H1 (cell line): ENCODE measurements at regions of chr11 and their contacts with region 1.

Region 1: GRCh38 chr11:73866586-73866996 is 10.1 kb downstream of the COA4 start:
- DNase-seq: no peak
- H3K4me3 ChIP-seq: no peak overlapping the region
- H3K27ac ChIP-seq: no peak overlapping the region
- H3K4me1 ChIP-seq: peaks cover 0 to 2% (median 0%) of the 10 kb centered on the region in 4 experiments; a peak in 1 of 7 replicates
- H3K27me3 ChIP-seq: no peaks in the 10 kb centered on the region
- CTCF ChIP-seq: no peak
- EP300 ChIP-seq: no peak
- POLR2A ChIP-seq: peak in 1 of 2 experiments; percentile 8; a peak in 2 of 3 replicates
- RAD21 ChIP-seq: no peak

Region 2: GRCh38 chr11:73856031-73856567 is 10.5 kb before region 1 on chr11:
- CTCF ChIA-PET with region 1: interaction called, 6 read pairs
- POLR2A ChIA-PET with region 1: interaction called, 55 read pairs
- DNase-seq: no peak
- H3K4me3 ChIP-seq: no peak overlapping the region
- H3K27ac ChIP-seq: no peak overlapping the region
- H3K4me1 ChIP-seq: peaks cover 0 to 8% (median 6%) of the 10 kb centered on the region in 4 experiments; a peak in 3 of 7 replicates
- H3K27me3 ChIP-seq: no peaks in the 10 kb centered on the region
- CTCF ChIP-seq: no peak
- EP300 ChIP-seq: no peak
- POLR2A ChIP-seq: no peak
- RAD21 ChIP-seq: no peak

Region 3: DNA sequence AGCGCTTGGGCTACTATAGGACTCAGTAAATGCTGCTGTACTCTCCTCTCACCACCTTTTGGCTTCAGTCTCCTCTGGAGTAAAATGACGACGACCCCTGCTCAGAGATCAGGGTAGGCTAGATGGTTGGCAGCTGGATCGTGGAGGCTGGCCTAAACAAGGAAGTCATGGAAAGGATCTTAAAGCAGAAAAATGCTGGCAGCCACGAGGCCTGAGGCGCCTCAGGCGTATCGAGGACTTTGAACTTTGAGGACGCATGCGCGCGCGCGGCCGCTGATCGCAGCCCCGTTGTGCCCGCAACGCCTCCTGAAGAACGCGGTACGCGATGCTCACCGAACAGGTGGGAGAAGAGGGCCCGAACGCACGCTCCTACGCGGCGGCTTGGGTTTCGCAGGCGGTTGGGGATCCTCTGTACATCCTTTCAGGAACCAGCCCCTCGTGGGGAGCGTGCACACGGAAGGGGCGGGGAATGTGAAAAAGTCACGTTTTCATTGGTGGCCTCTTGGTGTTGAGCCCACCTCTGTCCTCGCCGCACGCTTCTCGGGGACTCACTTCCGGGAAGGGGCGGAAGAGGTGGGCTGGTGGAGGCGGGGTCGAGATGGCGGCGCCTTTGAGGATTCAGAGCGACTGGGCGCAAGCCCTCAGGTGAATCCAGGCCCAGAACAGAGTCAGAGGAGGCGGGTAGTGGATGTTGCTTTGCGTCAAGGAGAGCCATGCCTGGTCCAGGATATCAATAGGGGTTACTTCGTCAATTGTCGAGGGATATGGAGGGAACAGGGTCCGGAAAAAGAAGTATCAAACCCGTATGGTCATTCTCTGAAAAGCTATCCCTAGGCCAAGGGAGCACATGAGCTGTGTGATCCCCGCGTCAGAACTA is 10.1 kb after region 1 on chr11 and contains the starts of genes COA4 and PAAF1:
- CTCF ChIA-PET with region 1: interaction called, 3 read pairs
- POLR2A ChIA-PET with region 1: interaction called, 55 read pairs
- DNase-seq: peak; percentile 96 to 97
- H3K4me3 ChIP-seq: peak within 1 kb of the TSS; percentile 57 to 100 (median 89)
- H3K27ac ChIP-seq: peak within 1 kb of the TSS; percentile 89
- H3K4me1 ChIP-seq: peaks cover 4 to 9% (median 7%) of the 10 kb centered on the region in 4 experiments; a peak in 6 of 7 replicates
- H3K27me3 ChIP-seq: no peaks in the 10 kb centered on the region
- CTCF ChIP-seq: no peak
- EP300 ChIP-seq: no peak
- POLR2A ChIP-seq: peak; percentile 88 to 97
- RAD21 ChIP-seq: 0 out of 4 replicates have a peak, but pooled peaks of 1 of the 2 experiments have one; percentile 1
- total RNA-seq, gene COA4: 177 TPM in 2 replicates
- total RNA-seq, gene PAAF1: 28.8 TPM in 2 replicates